GM10248 (cell line): ENCODE measurements at regions of chr13 and their contacts with region 1.

Region 1: DNA sequence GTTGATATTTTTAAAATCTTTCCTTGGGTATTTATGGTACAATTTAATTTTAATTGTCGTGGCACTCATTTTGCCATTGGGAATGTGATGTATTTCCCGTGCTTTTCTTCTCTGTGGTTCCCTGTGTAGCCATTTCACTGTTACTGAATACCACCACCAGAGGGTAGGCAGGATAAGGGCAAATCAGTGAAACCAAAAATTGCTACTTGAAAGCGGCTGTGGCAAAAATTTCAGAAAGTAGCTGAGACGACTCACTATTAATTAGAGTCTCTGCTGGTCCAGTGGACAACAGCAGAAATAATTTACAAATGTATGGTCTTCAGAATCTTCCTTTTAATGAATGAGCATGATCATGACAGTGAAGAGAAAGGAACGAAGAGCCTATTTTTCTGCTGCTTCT is 34.4 kb upstream of the MIR17HG start:
- DNase-seq: no peak
- CTCF ChIP-seq: peak; percentile 76

Region 2: DNA sequence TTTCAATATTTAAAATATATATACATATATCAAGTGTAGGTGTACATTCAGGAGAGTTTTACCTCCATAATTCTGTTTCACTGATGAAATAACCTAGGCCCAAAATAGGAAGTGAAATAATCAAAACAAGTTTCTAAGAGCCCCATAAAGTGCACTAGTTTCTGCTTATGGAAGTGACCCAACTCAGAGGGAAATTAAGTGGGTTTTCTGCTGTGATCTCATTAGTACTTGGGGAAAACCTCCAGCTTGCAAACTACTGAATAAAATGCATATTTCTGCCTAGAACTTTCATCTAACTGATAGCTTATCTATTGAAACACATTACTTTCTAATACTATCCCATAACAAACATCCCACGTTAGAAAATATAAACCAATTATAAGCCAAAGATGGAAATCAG is 11.0 kb before region 1 on chr13:
- CTCF ChIA-PET with region 1: interaction called, 28 read pairs
- POLR2A ChIA-PET with region 1: no interaction called
- DNase-seq: peak; percentile 39
- CTCF ChIP-seq: no peak

Region 3: DNA sequence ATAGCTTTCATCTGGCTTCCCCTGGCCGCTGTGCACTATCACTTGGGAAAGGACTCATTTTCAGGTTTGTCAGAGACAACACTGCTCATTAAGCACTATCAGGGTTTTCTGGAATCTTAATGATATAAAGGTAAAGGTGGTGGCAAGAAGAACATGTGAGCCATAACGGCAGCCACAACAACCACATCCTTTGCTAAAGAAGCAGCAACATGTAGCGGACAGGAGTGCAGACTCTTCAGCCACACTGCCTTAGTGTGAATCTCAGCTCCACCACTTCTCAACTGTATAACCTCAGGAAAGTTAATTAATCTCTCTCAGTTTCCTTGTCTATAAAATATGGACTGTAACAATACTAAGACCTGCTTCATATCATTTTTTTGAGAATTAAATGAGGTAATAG is 10.2 kb after region 1 on chr13:
- CTCF ChIA-PET with region 1: interaction called, 19 read pairs
- POLR2A ChIA-PET with region 1: no interaction called
- DNase-seq: no peak
- CTCF ChIP-seq: no peak

Region 4: GRCh38 chr13:91331047-91331915 is 18.2 kb after region 1 on chr13:
- CTCF ChIA-PET with region 1: interaction called, 15 read pairs
- POLR2A ChIA-PET with region 1: no interaction called
- DNase-seq: peak; percentile 23
- CTCF ChIP-seq: no peak

Region 5: GRCh38 chr13:91406619-91407018 is 93.5 kb after region 1 on chr13:
- CTCF ChIA-PET with region 1: interaction called, 12 read pairs
- POLR2A ChIA-PET with region 1: no interaction called
- DNase-seq: peak; percentile 50
- CTCF ChIP-seq: peak; percentile 55